Activated B cell treated with CpG ODN at 0.5 μM for 24 hours (primary cell): ENCODE measurements at regions of chr1 and their contacts with region 1.

Region 1: DNA sequence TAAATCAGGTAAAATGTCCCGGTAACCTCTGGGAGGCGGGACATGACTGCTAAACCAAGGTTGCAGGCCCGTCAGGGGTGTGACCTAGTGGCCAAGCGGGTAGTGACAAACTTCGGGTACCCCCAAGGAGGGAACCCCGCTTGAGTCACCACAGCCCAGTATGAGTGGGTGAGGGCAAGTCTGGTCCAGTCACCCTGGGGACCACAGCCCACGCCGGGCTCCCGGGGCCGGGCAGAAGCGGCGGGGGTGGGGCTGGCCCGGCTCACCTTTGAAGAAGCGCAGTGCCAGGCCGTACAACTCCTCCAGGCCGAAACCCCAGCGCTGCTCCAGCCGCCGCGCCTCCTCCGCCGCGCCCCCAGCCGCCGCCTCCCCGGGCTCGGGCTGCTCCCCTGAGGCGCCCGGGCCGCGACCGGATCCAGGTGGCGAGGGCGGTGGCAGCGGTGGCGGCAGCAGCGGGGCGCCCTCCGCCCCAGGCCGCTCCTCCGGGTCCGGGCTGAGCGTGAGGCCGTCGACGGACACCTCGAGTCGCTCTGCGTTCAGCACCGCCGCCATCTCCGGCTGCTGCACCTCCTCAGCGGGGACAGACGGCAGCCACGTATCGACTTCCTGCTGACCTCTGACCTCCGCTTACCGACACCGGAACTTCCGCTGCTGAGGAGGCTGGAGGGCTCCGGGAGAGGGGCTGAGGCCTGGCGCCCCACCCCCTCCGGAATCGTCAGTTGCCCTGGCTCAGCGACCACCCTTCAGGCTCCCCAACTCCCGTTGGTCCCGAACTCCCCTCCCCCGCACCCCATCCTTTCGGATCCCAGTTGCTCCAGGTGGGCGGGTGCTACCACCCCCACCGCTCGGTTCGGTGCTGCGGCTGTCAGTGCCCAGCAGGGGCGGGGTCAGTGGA is at the start of gene ACBD3:
- DNase-seq: peak; percentile 79
- ATAC-seq: peak; percentile 93
- H3K4me3 Mint-ChIP-seq: peak within 1 kb of the TSS; percentile 94
- H3K27ac Mint-ChIP-seq: peak within 1 kb of the TSS; percentile 94
- H3K4me1 Mint-ChIP-seq: peaks cover 45% of the 10 kb centered on the region
- H3K27me3 Mint-ChIP-seq: no peaks in the 10 kb centered on the region
- CTCF ChIP-seq: no peak
- total RNA-seq, gene ACBD3: 38.6 and 41.4 TPM in 2 replicates

Region 2: GRCh38 chr1:225299624-225300023 is 886.7 kb before region 1 on chr1:
- CTCF ChIA-PET with region 1: no interaction called
- POLR2A ChIA-PET with region 1: no interaction called
- intact Hi-C with region 1: no loop called
- DNase-seq: no peak
- ATAC-seq: no peak
- H3K4me3 Mint-ChIP-seq: no peak overlapping the region
- H3K27ac Mint-ChIP-seq: no peak overlapping the region
- H3K4me1 Mint-ChIP-seq: peaks cover 2% of the 10 kb centered on the region
- H3K27me3 Mint-ChIP-seq: peaks cover 6% of the 10 kb centered on the region
- CTCF ChIP-seq: no peak

Region 3: GRCh38 chr1:225467193-225468020 is 719.0 kb before region 1 on chr1:
- CTCF ChIA-PET with region 1: no interaction called
- POLR2A ChIA-PET with region 1: no interaction called
- intact Hi-C with region 1: loop called (anchors 5 kb)
- DNase-seq: peak; percentile 75
- ATAC-seq: peak; percentile 86
- H3K4me3 Mint-ChIP-seq: peak overlapping the region; percentile 90
- H3K27ac Mint-ChIP-seq: peak overlapping the region; percentile 98
- H3K4me1 Mint-ChIP-seq: peaks cover 40% of the 10 kb centered on the region
- H3K27me3 Mint-ChIP-seq: no peaks in the 10 kb centered on the region
- CTCF ChIP-seq: no peak

Region 4: GRCh38 chr1:226128487-226129075 is 57.8 kb before region 1 on chr1:
- CTCF ChIA-PET with region 1: interaction called, 81 read pairs
- POLR2A ChIA-PET with region 1: interaction called, 21 read pairs
- intact Hi-C with region 1: loop called (anchors 1 kb)
- DNase-seq: no peak
- ATAC-seq: no peak
- H3K4me3 Mint-ChIP-seq: peak overlapping the region; percentile 41
- H3K27ac Mint-ChIP-seq: peak overlapping the region; percentile 99
- H3K4me1 Mint-ChIP-seq: peaks cover 96% of the 10 kb centered on the region
- H3K27me3 Mint-ChIP-seq: no peaks in the 10 kb centered on the region
- CTCF ChIP-seq: no peak

Region 5: GRCh38 chr1:226157761-226158316 is 28.5 kb before region 1 on chr1:
- CTCF ChIA-PET with region 1: interaction called, 4 read pairs
- POLR2A ChIA-PET with region 1: interaction called, 3 read pairs
- intact Hi-C with region 1: loop called (anchors 2 kb)
- DNase-seq: no peak
- ATAC-seq: peak; percentile 80
- H3K4me3 Mint-ChIP-seq: peak overlapping the region; percentile 29
- H3K27ac Mint-ChIP-seq: peak overlapping the region; percentile 89
- H3K4me1 Mint-ChIP-seq: peaks cover 78% of the 10 kb centered on the region
- H3K27me3 Mint-ChIP-seq: no peaks in the 10 kb centered on the region
- CTCF ChIP-seq: no peak

Region 6: DNA sequence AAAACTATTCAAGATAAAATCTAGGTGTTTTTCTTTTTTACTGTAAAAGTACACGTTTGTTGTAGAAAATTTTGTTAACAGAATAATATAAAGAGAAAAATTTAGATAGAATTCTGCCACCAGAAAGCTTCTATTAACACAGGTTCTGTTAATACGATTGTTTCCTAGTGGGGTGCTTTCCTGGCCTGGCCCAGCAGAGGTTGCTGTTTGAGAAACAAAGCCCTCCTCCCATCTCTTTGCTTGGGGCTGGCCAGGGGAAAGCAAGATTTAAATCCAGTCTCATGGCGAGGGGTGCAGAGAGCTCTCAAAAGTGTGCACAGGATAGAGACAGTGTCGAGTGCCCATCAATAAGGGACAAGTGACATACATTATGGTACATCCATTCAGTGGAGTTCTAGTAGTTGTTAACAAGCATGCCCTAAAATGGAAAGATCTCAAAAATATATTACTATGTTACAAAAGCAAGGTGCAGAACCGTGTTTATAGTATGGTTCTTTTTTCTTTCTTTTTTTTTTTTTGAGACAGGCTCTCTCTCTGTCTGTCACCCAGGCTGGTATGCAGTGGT is 14.7 kb after region 1 on chr1:
- CTCF ChIA-PET with region 1: interaction called, 13 read pairs
- POLR2A ChIA-PET with region 1: interaction called, 5 read pairs
- intact Hi-C with region 1: loop called (anchors 1 kb)
- DNase-seq: no peak
- ATAC-seq: no peak
- H3K4me3 Mint-ChIP-seq: no peak overlapping the region
- H3K27ac Mint-ChIP-seq: no peak overlapping the region
- H3K4me1 Mint-ChIP-seq: peaks cover 27% of the 10 kb centered on the region
- H3K27me3 Mint-ChIP-seq: peaks cover 2% of the 10 kb centered on the region
- CTCF ChIP-seq: no peak

Region 7: DNA sequence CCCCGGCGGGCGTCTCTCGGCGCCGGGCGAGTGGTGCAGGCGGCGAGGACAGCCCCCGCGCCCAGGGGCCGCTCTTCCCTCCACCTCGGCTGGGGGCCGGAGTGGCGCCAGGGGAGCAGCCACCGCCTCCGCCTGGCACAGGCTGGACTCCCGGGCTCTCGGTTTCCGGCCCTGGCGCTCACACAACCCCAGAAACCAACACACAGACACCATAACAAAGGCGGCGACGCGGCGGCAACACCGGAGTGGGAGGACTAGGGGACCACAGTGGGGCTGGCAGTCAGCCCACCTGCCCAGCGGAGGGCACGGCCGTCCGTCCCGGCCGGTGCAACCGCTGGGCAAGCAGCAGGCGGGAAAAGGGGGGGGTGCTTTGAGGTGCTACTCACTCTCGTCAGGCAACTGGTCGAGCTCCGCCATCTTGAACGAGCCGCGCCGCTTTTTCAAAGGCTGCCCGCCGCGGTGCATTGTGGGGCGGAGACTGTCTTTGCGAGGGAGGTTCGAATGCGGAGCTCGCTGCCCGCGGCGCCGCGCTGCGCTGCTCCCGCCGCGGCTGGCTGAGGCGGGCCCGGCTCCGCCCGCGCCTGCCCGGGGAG is 122.4 kb after region 1 on chr1 and contains the start of gene LIN9:
- CTCF ChIA-PET with region 1: no interaction called
- POLR2A ChIA-PET with region 1: no interaction called
- intact Hi-C with region 1: loop called (anchors 5 kb)
- DNase-seq: peak; percentile 91
- ATAC-seq: peak; percentile 92
- H3K4me3 Mint-ChIP-seq: peak within 1 kb of the TSS; percentile 92
- H3K27ac Mint-ChIP-seq: peak within 1 kb of the TSS; percentile 65
- H3K4me1 Mint-ChIP-seq: peaks cover 10% of the 10 kb centered on the region
- H3K27me3 Mint-ChIP-seq: peaks cover 4% of the 10 kb centered on the region
- CTCF ChIP-seq: no peak
- total RNA-seq, gene LIN9: 3.5 and 4.5 TPM in 2 replicates